ENCODE measurements at regions of chr13 and their contacts with region 1.

Region 1: GRCh38 chr13:49247643-49248621 is at the start of gene CDADC1:
- DNase-seq: peak; percentile 88
- H3K4me3 Mint-ChIP-seq: peak within 1 kb of the TSS; percentile 93
- H3K27ac Mint-ChIP-seq: peak within 1 kb of the TSS; percentile 96
- H3K4me1 Mint-ChIP-seq: peaks cover 26% of the 10 kb centered on the region
- H3K27me3 Mint-ChIP-seq: peaks cover 11% of the 10 kb centered on the region
- total RNA-seq, gene CDADC1: 7.4 and 8.6 TPM in 2 replicates

Region 2: GRCh38 chr13:49110122-49110912 is 137.6 kb before region 1 on chr13:
- intact Hi-C with region 1: loop called (anchors 1 kb)
- DNase-seq: peak; percentile 68
- H3K4me3 Mint-ChIP-seq: peak overlapping the region; percentile 85
- H3K27ac Mint-ChIP-seq: peak overlapping the region; percentile 77
- H3K4me1 Mint-ChIP-seq: peaks cover 16% of the 10 kb centered on the region
- H3K27me3 Mint-ChIP-seq: no peaks in the 10 kb centered on the region

Region 3: DNA sequence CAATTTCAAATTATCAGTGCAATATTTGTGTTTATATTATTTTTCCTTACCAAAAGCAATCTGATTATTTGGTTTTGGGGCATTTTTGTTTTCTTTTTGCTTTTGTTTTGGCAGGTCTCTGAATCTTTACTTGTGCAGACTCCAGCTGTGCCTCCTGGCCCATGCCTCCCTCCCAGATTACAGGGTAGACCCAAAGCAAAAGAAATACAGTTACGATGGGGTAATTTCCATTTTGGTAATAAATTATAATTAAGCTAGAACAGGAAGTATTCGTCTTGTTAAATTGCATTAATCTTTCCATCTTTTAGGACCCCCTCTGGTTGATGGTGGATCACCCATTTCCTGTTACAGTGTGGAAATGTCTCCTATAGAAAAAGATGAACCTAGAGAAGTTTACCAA is 57.0 kb before region 1 on chr13:
- intact Hi-C with region 1: no loop called
- DNase-seq: no peak
- H3K4me3 Mint-ChIP-seq: no peak overlapping the region
- H3K27ac Mint-ChIP-seq: no peak overlapping the region
- H3K4me1 Mint-ChIP-seq: peaks cover 2% of the 10 kb centered on the region
- H3K27me3 Mint-ChIP-seq: no peaks in the 10 kb centered on the region